ENCODE measurements at regions of chr18 and their contacts with region 1.

Region 1: DNA sequence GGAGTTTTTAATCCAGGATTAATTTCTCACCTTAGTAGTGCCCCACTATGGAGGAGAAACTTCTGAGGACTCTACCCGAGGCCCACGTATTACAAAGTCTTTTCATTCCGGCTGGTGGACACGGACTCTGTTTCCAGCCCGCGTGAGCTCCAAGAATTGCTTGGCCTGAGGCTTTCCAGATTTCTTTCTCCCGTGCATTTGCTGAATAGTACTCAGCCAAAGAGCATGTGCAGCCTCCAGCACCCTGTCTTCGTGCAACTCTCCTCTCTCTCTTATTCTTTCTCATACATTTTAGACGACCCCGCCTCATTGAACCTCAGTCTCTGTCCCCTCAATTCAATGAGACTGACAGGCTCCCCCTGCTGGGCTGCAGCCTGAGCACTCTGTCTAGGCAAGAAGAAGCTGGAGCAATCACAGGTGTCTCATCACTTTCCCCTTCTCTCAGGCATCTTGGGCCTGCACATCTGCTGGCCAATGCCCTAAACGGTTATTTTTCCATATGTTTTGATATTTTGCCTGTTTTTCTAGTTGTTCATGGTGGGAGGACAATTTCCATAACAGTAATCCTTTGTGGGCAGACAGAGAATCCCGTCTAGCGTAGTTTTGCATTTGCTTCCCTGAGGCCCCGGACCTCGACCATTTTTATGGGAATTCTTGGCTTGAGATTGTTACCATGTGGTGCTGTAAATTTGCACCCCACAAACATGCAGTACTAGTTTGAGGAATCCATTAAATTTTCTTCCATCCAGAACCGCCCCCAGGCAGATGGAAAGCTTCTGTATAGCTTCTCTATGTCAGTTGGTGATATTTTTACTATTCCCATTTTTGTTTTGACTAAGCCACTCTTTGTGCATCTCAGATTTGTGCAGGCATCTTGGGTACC is 50.1 kb upstream of the LPIN2 start:
- DNase-seq: peak; percentile 13
- ATAC-seq: peak; percentile 96
- H3K4me3 ChIP-seq: no peak overlapping the region
- H3K27ac ChIP-seq: no peak overlapping the region
- H3K4me1 ChIP-seq: no peaks in the 10 kb centered on the region
- H3K27me3 ChIP-seq: no peaks in the 10 kb centered on the region
- CTCF ChIP-seq: peak; percentile 54 to 96 (median 87); a peak in 5 of 6 replicates
- POLR2A ChIP-seq: no peak
- RAD21 ChIP-seq: peak; percentile 67

Region 2: DNA sequence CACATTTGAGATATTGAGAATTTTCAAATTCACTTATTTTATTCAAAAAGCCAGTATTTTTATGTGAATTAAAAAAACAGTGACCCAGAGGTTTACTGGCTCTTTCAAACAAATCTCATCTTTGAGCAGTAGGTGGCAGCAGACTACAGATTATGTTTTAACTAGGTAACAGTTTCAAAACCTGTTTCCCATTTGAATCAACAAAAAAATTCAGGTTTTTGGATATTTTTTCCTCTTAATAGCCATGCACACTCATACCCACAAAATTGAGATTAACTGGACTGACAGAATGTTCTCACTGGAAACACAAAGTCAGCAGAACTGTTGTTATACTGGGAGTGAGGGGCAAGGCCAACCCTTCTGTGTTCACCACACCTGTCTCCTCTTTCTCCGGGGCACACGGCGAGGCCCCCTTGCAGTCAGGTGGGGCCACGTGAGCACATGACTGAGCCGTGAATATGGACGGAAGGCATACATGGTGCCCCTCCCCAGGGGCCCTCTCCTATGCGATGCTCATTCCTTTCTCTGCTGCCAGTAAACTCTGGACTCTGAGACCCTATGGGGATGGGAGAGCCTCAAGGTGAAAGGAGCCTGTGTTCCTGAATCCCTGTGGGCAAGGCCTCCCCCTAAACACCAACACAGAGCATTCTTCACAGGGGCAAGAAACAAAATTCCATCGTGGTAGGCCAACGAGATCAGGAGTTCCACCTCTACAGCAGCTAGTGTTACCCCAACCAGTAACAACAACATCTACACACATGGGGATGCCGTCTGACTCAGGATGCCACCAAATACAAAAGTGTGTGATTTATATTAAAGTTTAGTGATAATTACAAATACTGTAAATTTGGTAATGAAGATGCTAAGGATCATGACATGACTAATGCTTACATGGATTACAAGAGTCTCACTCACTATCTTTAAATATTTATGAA is 130.5 kb before region 1 on chr18:
- CTCF ChIA-PET with region 1: no interaction called
- POLR2A ChIA-PET with region 1: no interaction called
- RAD21 ChIA-PET with region 1: no interaction called
- intact Hi-C with region 1: loop called (anchors 5 kb)
- DNase-seq: peak; percentile 34
- ATAC-seq: peak; percentile 63
- H3K4me3 ChIP-seq: no peak overlapping the region
- H3K27ac ChIP-seq: no peak overlapping the region
- H3K4me1 ChIP-seq: no peaks in the 10 kb centered on the region
- H3K27me3 ChIP-seq: no peaks in the 10 kb centered on the region
- CTCF ChIP-seq: peak; percentile 54 to 78 (median 75)
- POLR2A ChIP-seq: no peak
- RAD21 ChIP-seq: peak; percentile 80

Region 3: DNA sequence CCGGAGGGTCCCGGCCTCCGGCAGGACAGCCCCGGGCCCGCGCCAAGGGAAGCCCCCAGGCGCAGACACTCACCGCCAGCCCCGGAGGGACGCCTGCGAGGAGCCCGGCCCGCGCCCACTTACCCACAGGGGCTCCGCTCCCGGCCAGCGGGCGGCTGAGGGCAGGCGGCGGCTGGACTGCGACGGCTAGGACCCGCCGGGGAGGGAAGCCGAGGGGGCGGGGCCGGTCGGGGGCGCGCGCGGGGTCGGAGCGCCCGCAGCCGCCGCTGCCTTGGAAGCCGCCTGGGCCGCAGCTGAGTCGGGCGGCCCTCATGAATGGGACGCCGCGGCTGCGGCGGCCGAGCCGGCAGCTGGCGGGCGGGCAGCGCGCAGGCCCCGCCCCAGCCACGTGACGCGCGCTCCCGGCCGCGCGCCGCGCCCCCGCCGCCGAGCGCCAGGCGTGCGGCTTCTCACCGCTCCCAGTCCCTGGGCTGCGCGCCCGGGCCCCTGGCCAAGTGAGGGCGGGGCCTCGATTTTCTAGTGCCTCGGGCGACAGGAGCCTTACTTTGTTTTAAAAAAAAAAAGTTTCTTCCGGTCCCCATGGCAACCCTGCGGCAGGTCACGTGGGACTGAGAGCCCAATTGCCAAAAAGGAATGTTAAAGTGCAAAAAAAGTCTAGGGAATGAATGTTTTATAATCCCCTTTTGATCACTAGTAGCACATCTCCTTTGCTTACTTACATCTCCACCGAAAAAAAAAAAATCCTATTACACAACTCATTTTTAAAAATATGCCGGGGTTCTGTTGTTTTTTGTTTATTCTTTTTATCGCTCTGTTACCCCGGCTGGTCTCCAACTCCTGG is 49.9 kb before region 1 on chr18 and contains the start of gene LPIN2:
- CTCF ChIA-PET with region 1: interaction called, 10 read pairs
- POLR2A ChIA-PET with region 1: interaction called, 3 read pairs
- RAD21 ChIA-PET with region 1: no interaction called
- intact Hi-C with region 1: no loop called
- DNase-seq: peak; percentile 87
- ATAC-seq: peak; percentile 90
- H3K4me3 ChIP-seq: peak within 1 kb of the TSS; percentile 56 to 69
- H3K27ac ChIP-seq: peak within 1 kb of the TSS; percentile 80
- H3K4me1 ChIP-seq: peaks cover 23 to 33% of the 10 kb centered on the region in 2 experiments
- H3K27me3 ChIP-seq: no peaks in the 10 kb centered on the region
- CTCF ChIP-seq: no peak
- POLR2A ChIP-seq: peak; percentile 38
- RAD21 ChIP-seq: no peak
- total RNA-seq, gene LPIN2: 10.7 TPM

Region 4: GRCh38 chr18:3048121-3048520 is 14.9 kb before region 1 on chr18:
- CTCF ChIA-PET with region 1: interaction called, 10 read pairs
- POLR2A ChIA-PET with region 1: no interaction called
- RAD21 ChIA-PET with region 1: no interaction called
- intact Hi-C with region 1: no loop called
- DNase-seq: no peak
- ATAC-seq: no peak
- H3K4me3 ChIP-seq: no peak overlapping the region
- H3K27ac ChIP-seq: no peak overlapping the region
- H3K4me1 ChIP-seq: peaks cover 0 to 13% of the 10 kb centered on the region in 2 experiments
- H3K27me3 ChIP-seq: no peaks in the 10 kb centered on the region
- CTCF ChIP-seq: no peak
- POLR2A ChIP-seq: no peak
- RAD21 ChIP-seq: no peak

Region 5: DNA sequence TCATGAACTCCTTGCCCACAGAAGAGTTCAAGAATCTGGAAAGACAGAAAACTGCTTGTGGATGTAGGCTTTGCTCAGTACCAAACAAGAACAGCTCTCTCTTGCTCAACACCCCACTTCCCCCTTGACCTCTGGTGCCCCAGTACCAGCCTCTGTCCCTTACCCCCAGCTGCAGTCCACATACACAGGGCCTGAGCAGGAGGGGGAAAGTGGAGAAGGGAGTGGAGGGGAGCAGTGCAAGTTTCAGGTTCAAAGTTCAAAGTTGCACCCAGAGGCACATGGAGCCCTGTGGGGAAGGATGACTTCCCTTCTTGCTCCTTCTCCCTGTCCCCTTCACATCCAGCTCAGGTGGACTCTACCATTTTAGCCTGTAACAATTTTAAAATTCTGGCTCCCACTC is 11.0 kb after region 1 on chr18:
- CTCF ChIA-PET with region 1: interaction called, 17 read pairs
- POLR2A ChIA-PET with region 1: no interaction called
- RAD21 ChIA-PET with region 1: no interaction called
- intact Hi-C with region 1: no loop called
- DNase-seq: no peak
- ATAC-seq: no peak
- H3K4me3 ChIP-seq: no peak overlapping the region
- H3K27ac ChIP-seq: no peak overlapping the region
- H3K4me1 ChIP-seq: no peaks in the 10 kb centered on the region
- H3K27me3 ChIP-seq: no peaks in the 10 kb centered on the region
- CTCF ChIP-seq: no peak
- POLR2A ChIP-seq: no peak
- RAD21 ChIP-seq: no peak

Region 6: DNA sequence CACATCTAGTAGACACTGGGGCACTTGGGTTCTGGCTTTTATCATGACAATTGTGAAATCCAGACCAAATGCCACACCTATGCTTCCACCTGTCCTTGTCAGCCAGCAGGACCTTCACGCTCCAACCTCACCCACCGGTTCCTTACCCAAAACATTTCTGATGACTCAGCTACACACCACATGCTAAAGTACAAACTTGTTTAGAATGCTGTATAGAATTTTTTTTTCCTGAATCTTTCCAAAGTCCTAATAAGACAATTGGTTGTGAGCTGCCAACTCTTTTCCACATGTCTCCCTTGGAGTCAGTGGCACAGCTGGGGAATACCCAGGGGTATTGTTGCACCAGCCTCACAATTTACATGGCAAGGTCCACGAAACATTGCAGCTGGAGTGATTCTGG is 25.4 kb after region 1 on chr18:
- CTCF ChIA-PET with region 1: interaction called, 15 read pairs
- POLR2A ChIA-PET with region 1: no interaction called
- RAD21 ChIA-PET with region 1: no interaction called
- intact Hi-C with region 1: no loop called
- DNase-seq: no peak
- ATAC-seq: no peak
- H3K4me3 ChIP-seq: no peak overlapping the region
- H3K27ac ChIP-seq: no peak overlapping the region
- H3K4me1 ChIP-seq: no peaks in the 10 kb centered on the region
- H3K27me3 ChIP-seq: no peaks in the 10 kb centered on the region
- CTCF ChIP-seq: no peak
- POLR2A ChIP-seq: no peak
- RAD21 ChIP-seq: no peak

Region 7: GRCh38 chr18:3135536-3135935 is 72.5 kb after region 1 on chr18:
- CTCF ChIA-PET with region 1: no interaction called
- POLR2A ChIA-PET with region 1: no interaction called
- RAD21 ChIA-PET with region 1: no interaction called
- intact Hi-C with region 1: no loop called
- DNase-seq: no peak
- ATAC-seq: no peak
- H3K4me3 ChIP-seq: no peak overlapping the region
- H3K27ac ChIP-seq: no peak overlapping the region
- H3K4me1 ChIP-seq: no peaks in the 10 kb centered on the region
- H3K27me3 ChIP-seq: no peaks in the 10 kb centered on the region
- CTCF ChIP-seq: no peak
- POLR2A ChIP-seq: no peak
- RAD21 ChIP-seq: no peak

Region 8: DNA sequence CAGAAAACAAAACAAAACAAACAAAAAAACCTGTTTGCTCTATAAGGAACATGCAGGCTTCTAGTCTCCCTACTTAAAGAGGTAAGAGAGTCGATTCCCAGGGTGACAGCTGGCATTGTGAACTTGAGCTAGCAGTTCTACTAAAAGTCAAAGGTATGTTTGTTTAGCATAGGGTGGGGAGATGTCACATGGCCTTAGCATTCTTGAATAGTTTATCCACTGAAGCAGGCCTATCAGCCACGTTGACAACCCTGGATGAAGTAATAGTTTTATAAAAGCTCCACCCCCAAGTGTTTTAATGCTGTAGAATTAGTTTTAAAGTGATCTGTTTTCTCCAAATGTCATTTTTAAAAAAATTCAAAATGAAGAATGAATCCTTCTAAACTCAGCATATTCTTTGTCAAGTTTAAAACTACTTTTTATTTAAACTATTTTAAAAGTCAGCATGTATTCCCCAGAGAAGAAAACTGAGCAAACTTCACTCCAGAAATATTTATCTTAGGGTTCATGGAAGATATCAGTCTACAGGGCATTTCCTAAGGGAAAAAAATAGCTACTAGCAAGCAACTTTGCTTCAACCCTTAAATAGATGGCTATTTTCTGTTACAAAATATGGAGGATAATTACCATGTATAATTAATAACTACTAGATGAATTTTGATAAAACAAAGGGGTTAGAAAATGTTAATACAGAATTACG is 155.1 kb after region 1 on chr18:
- CTCF ChIA-PET with region 1: no interaction called
- POLR2A ChIA-PET with region 1: no interaction called
- RAD21 ChIA-PET with region 1: no interaction called
- intact Hi-C with region 1: no loop called
- DNase-seq: no peak
- ATAC-seq: no peak
- H3K4me3 ChIP-seq: no peak overlapping the region
- H3K27ac ChIP-seq: no peak overlapping the region
- H3K4me1 ChIP-seq: no peaks in the 10 kb centered on the region
- H3K27me3 ChIP-seq: no peaks in the 10 kb centered on the region
- CTCF ChIP-seq: no peak
- POLR2A ChIP-seq: no peak
- RAD21 ChIP-seq: no peak

Measured in HCT116 (cell line).